HCT116 (cell line): ENCODE measurements at regions of chr16 and their contacts with region 1.

Region 1: DNA sequence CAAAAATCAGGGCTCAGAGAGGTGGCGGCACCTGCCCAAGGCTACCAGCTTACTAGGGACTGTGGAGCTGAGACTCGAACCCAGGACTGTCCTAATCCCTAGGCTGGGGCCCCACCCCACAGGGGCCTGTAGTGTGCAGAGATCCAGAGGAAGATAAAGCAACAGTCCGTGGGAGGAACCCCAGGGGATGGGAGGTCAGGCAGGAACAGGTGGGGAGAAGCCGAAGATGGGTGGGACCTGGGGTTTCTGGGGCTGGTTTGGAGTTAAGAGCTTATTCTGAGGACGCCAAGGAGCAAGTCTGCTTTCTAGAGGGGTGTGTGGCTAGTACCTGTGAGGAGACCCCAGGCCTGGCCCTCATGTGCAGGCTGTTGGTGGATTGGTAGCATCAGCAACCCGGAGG is 14.9 kb downstream of the C16orf74 start:
- DNase-seq: no peak
- ATAC-seq: no peak
- H3K4me3 ChIP-seq: no peak overlapping the region
- H3K27ac ChIP-seq: no peak overlapping the region
- H3K4me1 ChIP-seq: no peaks in the 10 kb centered on the region
- H3K27me3 ChIP-seq: no peaks in the 10 kb centered on the region
- CTCF ChIP-seq: no peak
- POLR2A ChIP-seq: no peak
- RAD21 ChIP-seq: no peak

Region 2: DNA sequence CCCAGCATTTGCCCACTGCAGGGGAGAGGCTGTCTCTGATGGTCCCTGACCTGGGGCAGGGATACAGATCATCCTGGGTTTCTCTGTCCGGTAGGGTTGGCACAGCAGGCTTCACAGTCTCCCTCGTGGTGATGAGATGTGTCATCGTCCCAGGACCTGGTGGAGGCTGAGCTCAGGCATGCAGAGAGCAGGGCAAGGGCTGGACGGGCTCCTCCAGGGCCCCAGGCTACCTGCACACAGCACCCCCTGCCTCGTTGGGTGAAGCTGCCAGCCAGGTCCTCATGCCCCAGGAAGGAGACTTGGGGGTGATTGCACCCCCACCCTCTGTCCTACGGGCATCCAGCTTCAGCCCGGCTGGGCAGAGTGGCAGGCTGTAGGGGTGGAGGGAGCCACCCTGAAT is 278.6 kb before region 1 on chr16:
- CTCF ChIA-PET with region 1: no interaction called
- POLR2A ChIA-PET with region 1: no interaction called
- RAD21 ChIA-PET with region 1: no interaction called
- intact Hi-C with region 1: no loop called
- DNase-seq: no peak
- ATAC-seq: peak; percentile 49; the same call in 1 of the 2 replicates
- H3K4me3 ChIP-seq: no peak overlapping the region
- H3K27ac ChIP-seq: no peak overlapping the region
- H3K4me1 ChIP-seq: peaks cover 11 to 17% of the 10 kb centered on the region in 2 experiments; a peak in 3 of 4 replicates
- H3K27me3 ChIP-seq: peaks cover 8% of the 10 kb centered on the region; the same call in 1 of the 2 replicates
- CTCF ChIP-seq: no peak
- POLR2A ChIP-seq: no peak
- RAD21 ChIP-seq: no peak

Region 3: DNA sequence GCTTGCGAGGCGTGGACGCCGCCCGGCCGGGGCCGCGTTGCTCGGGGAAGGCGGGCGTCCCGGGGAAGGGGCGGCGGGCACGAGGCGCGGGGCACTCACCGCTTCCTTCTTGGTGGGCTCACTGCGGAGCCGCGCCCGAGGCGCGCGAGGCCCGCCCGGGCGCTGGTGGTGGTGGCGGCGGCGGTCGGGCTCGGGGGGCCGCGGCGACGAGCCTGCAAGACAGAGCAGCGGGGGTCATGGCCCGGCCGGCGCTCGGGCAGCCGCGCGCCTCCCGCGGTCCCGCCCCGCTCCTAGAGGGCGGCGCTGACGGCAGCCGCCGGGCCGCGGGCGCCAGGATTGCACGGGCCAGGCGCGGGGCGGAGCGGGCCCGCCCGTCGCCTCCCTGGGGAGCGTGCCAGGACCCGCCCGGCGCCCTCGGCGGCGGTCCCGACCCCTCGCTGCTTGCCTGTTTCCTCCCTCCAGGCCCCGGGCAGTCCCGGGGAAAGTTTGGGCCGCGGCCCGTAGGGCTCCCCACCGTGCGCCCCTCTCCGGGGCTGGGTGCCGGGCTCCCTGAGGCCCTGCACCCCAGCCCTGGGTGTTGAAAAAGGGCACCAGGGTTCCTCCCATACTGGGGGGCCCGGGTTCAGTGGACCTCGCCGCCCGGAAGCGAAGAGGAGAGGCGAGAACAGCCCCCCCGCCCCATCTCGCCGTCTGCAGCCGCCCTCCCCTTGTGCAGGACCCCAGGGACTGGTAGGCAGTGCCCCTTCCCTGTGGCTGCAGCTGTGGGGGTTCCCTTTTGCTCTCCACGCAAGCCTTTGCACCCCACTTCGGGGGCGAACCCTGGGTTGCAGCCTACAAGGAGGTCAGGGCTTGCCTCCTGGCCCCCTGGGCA is 15.1 kb after region 1 on chr16 and contains the start of gene C16orf74:
- CTCF ChIA-PET with region 1: no interaction called
- POLR2A ChIA-PET with region 1: interaction called, 11 read pairs
- RAD21 ChIA-PET with region 1: no interaction called
- intact Hi-C with region 1: no loop called
- DNase-seq: no peak
- ATAC-seq: peak; percentile 79
- H3K4me3 ChIP-seq: peak within 1 kb of the TSS; percentile 69 to 72
- H3K27ac ChIP-seq: peak within 1 kb of the TSS; percentile 82
- H3K4me1 ChIP-seq: peaks cover 42 to 63% of the 10 kb centered on the region in 2 experiments
- H3K27me3 ChIP-seq: no peaks in the 10 kb centered on the region; the same call in 1 of the 2 replicates
- CTCF ChIP-seq: no peak
- POLR2A ChIP-seq: peak; percentile 47
- RAD21 ChIP-seq: no peak
- total RNA-seq, gene C16orf74: 30.0 TPM

Region 4: GRCh38 chr16:85799497-85800337 is 63.8 kb after region 1 on chr16 and contains the starts of genes COX4I1 and EMC8:
- CTCF ChIA-PET with region 1: no interaction called
- POLR2A ChIA-PET with region 1: no interaction called
- RAD21 ChIA-PET with region 1: no interaction called
- intact Hi-C with region 1: no loop called
- DNase-seq: peak; percentile 91
- ATAC-seq: peak; percentile 94
- H3K4me3 ChIP-seq: peak within 1 kb of the TSS; percentile 92 to 93
- H3K27ac ChIP-seq: peak within 1 kb of the TSS; percentile 90
- H3K4me1 ChIP-seq: peaks cover 11 to 22% of the 10 kb centered on the region in 2 experiments; a peak in 3 of 4 replicates
- H3K27me3 ChIP-seq: no peaks in the 10 kb centered on the region
- CTCF ChIP-seq: no peak
- POLR2A ChIP-seq: peak; percentile 92
- RAD21 ChIP-seq: no peak
- total RNA-seq, gene COX4I1: 839 TPM
- total RNA-seq, gene EMC8: 73.0 TPM